WTC11 (cell line): ENCODE measurements at regions of chr5 and their contacts with region 1.

Region 1: GRCh38 chr5:148730943-148731861 is 76.9 kb upstream of the HTR4 start:
- DNase-seq: peak; percentile 59
- ATAC-seq: peak; percentile 77
- H3K4me3 Mint-ChIP-seq: no peak overlapping the region
- H3K27ac Mint-ChIP-seq: no peak overlapping the region
- H3K4me1 Mint-ChIP-seq: peaks cover 18% of the 10 kb centered on the region
- H3K27me3 Mint-ChIP-seq: no peaks in the 10 kb centered on the region
- CTCF ChIP-seq: peak; percentile 64

Region 2: DNA sequence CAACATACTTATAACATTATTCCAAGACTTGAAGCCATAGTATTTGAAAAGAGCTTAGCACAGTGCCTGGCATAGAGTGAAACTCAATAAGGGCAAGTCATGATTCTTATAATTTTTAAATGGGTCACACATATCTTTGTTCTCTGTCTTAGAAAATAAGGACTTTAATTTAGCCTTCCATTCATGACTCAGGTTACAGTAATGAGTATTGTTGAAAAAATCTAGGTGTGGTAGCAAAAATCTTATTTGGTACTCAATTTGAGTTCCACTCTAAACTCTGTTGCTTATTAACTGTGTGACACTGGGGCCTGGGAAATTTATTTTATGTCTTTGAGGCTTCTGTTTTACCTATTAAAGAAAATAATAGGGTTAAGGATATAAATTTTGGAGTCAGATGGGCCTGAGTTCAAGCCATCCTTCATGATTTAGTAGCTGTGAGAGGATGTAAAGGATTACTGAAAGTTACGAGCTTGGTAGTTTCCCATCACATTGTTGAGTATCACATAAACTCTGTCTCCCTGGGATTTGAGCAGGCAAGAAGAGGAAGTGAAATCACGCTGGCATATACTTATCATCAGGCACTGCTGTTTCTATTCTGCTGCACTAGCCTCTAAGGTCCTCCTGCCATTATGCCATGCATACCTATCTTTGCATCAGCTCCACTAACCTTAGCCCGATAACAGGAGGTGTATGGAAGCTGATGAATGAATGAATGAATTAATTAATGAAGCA is 394.3 kb before region 1 on chr5:
- CTCF ChIA-PET with region 1: no interaction called
- POLR2A ChIA-PET with region 1: no interaction called
- DNase-seq: no peak
- ATAC-seq: no peak
- H3K4me3 Mint-ChIP-seq: no peak overlapping the region
- H3K27ac Mint-ChIP-seq: no peak overlapping the region
- H3K4me1 Mint-ChIP-seq: no peaks in the 10 kb centered on the region
- H3K27me3 Mint-ChIP-seq: no peaks in the 10 kb centered on the region
- CTCF ChIP-seq: no peak

Region 3: GRCh38 chr5:148443998-148444397 is 287.2 kb before region 1 on chr5:
- CTCF ChIA-PET with region 1: interaction called, 97 read pairs
- POLR2A ChIA-PET with region 1: no interaction called
- DNase-seq: peak; percentile 18
- ATAC-seq: peak; percentile 85
- H3K4me3 Mint-ChIP-seq: no peak overlapping the region
- H3K27ac Mint-ChIP-seq: no peak overlapping the region
- H3K4me1 Mint-ChIP-seq: peaks cover 13% of the 10 kb centered on the region
- H3K27me3 Mint-ChIP-seq: no peaks in the 10 kb centered on the region
- CTCF ChIP-seq: peak; percentile 62

Region 4: DNA sequence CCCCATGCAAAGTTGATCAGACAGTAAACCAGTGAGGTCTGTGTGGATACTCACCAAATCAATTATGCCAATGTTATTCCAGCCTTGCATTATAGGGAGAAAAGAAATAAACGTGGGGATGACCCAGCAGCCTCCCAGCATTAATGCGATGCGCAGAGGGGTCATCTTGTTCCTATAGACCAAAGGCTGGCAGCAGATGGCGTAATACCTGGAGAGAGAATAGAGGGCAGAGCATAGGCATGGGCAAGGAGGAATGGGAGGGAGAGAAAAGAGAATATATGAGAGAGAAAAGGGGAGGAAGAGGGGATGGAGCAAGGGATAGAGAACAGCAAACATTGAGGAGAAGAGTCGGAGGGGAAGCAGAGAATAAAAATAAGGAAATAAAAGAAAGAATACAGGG is 208.1 kb before region 1 on chr5:
- CTCF ChIA-PET with region 1: interaction called, 10 read pairs
- POLR2A ChIA-PET with region 1: no interaction called
- DNase-seq: peak; percentile 26
- ATAC-seq: peak; percentile 87
- H3K4me3 Mint-ChIP-seq: no peak overlapping the region
- H3K27ac Mint-ChIP-seq: no peak overlapping the region
- H3K4me1 Mint-ChIP-seq: peaks cover 8% of the 10 kb centered on the region
- H3K27me3 Mint-ChIP-seq: no peaks in the 10 kb centered on the region; the same call in 1 of the 2 replicates
- CTCF ChIP-seq: no peak

Region 5: GRCh38 chr5:148713735-148714508 is 17.3 kb before region 1 on chr5:
- CTCF ChIA-PET with region 1: interaction called, 26 read pairs
- POLR2A ChIA-PET with region 1: no interaction called
- DNase-seq: no peak
- ATAC-seq: no peak
- H3K4me3 Mint-ChIP-seq: no peak overlapping the region
- H3K27ac Mint-ChIP-seq: no peak overlapping the region
- H3K4me1 Mint-ChIP-seq: peaks cover 10% of the 10 kb centered on the region; the same call in 1 of the 2 replicates
- H3K27me3 Mint-ChIP-seq: peaks cover 3% of the 10 kb centered on the region
- CTCF ChIP-seq: no peak

Region 6: DNA sequence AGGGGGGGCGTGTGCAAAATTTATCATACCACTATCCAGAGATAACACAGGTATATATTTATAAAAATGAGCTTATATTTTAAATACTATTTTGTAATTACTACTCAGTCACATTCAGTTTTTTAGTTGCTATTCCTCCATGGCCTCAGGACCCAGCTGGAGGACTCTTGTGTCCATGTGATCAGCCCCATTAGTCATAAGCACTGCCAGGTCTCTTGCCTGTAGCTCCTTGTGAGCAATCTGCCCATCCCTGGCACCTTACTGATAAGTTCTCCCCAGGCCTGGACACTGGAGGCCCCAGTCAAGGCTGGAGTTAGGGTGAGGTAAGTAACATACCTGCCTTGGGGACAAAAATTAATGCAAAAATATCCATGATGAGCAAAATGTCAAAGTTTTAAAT is 65.7 kb after region 1 on chr5:
- CTCF ChIA-PET with region 1: no interaction called
- POLR2A ChIA-PET with region 1: no interaction called
- DNase-seq: no peak
- ATAC-seq: no peak
- H3K4me3 Mint-ChIP-seq: no peak overlapping the region
- H3K27ac Mint-ChIP-seq: no peak overlapping the region
- H3K4me1 Mint-ChIP-seq: no peaks in the 10 kb centered on the region
- H3K27me3 Mint-ChIP-seq: no peaks in the 10 kb centered on the region; the same call in 1 of the 2 replicates
- CTCF ChIP-seq: no peak

Region 7: DNA sequence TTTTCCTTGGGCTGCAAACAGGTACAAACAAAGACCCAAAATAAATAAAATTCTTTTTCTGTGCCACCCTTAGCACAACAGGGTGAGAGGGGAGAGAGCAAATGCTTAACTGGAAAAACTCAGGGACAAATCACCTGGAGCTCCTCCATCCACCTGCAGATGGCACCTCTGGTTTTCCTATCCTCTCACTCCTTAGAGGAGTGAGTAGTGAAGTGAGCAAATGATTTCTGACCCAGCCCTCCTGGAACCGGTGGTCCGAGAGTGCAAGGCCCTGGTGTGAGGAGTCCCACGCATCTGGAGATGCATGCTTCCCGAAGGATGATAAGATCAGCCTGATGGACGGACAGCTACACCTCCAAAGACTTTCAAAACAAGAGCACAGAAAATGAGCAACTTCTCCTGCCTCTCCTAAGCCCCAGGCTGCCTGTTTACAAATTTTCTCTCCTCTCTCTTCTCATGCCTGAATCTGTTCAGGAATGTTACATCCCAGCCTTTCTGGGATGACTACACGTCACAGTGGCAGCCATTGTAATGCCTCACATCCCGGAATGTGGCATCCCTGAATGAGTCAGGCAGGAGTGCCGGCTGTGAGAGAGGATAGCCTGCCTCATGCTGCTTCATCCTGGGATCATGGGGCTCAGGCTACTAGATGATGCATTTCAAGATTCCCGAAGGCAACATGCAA is 181.7 kb after region 1 on chr5:
- CTCF ChIA-PET with region 1: interaction called, 10 read pairs
- POLR2A ChIA-PET with region 1: no interaction called
- DNase-seq: peak; percentile 55
- ATAC-seq: peak; percentile 84
- H3K4me3 Mint-ChIP-seq: no peak overlapping the region
- H3K27ac Mint-ChIP-seq: peak overlapping the region; percentile 93
- H3K4me1 Mint-ChIP-seq: peaks cover 30% of the 10 kb centered on the region
- H3K27me3 Mint-ChIP-seq: no peaks in the 10 kb centered on the region
- CTCF ChIP-seq: 0 out of 2 replicates have a peak, but pooled peaks have one; percentile 0

Region 8: GRCh38 chr5:149035372-149035790 is 304.2 kb after region 1 on chr5:
- CTCF ChIA-PET with region 1: interaction called, 50 read pairs
- POLR2A ChIA-PET with region 1: no interaction called
- DNase-seq: peak; percentile 81
- ATAC-seq: peak; percentile 93
- H3K4me3 Mint-ChIP-seq: no peak overlapping the region
- H3K27ac Mint-ChIP-seq: no peak overlapping the region
- H3K4me1 Mint-ChIP-seq: no peaks in the 10 kb centered on the region
- H3K27me3 Mint-ChIP-seq: no peaks in the 10 kb centered on the region; the same call in 1 of the 2 replicates
- CTCF ChIP-seq: peak; percentile 64